BJ (cell line): ENCODE measurements at regions of chr4 and their contacts with region 1.

Region 1: GRCh38 chr4:128670513-128670912 is 139.0 kb upstream of the JADE1 start:
- DNase-seq: no peak
- H3K4me3 ChIP-seq: no peak overlapping the region
- H3K27me3 ChIP-seq: no peaks in the 10 kb centered on the region; the same call in 1 of the 2 replicates
- CTCF ChIP-seq: no peak

Region 2: GRCh38 chr4:128700659-128701350 is 30.3 kb after region 1 on chr4:
- CTCF ChIA-PET with region 1: no interaction called
- POLR2A ChIA-PET with region 1: interaction called, 17 read pairs
- DNase-seq: no peak
- H3K4me3 ChIP-seq: no peak overlapping the region
- H3K27me3 ChIP-seq: no peaks in the 10 kb centered on the region
- CTCF ChIP-seq: no peak